B cell (primary cell): ENCODE measurements at regions of chr10 and their contacts with region 1.

Region 1: DNA sequence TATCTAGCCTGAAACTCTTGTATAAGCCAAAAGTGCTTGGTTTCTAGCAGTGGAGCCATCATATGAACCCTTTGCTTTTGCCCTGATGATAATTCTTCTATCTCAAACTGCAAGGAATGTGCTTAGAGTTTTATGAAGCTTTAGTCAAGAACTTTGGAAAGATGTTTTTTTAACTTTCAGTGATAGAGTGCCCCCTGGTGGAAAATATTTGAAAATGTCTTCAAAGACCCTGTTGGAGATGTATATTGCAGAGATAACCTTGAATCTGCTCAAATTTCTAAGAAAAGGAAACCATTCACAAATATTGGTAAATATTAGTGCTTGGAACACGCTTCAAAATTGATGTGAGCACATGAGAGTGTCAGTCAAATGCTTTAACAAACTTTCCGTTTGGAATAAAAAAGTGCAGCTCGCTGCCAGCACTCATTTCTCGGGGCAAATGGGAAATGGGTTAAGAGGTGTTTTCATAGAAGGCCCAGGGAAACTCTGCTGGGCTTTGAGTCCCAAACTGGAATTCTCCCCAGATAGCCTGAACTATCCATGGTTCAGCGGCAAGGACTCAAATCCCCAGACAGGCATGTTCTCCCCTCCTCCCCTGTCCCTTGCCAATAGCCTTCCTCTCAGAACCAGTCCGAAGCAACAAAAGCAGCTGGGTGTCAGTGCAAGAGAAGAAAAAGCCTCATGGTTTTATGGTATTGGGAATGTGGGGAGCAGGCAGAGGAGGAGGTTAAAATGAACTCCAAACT is 129.3 kb downstream of the MYOF start:
- DNase-seq: peak; percentile 57
- ATAC-seq: no peak
- H3K4me3 ChIP-seq: no peak overlapping the region
- H3K4me3 Mint-ChIP-seq: no peak overlapping the region
- H3K27ac ChIP-seq: no peak overlapping the region
- H3K27ac Mint-ChIP-seq: no peak overlapping the region
- H3K4me1 ChIP-seq: no peaks in the 10 kb centered on the region
- H3K4me1 Mint-ChIP-seq: no peaks in the 10 kb centered on the region
- H3K27me3 ChIP-seq: peaks cover 0 to 4% (median 0%) of the 10 kb centered on the region in 4 experiments
- H3K27me3 Mint-ChIP-seq: peaks cover 17% of the 10 kb centered on the region
- CTCF ChIP-seq: peak; percentile 84

Region 2: DNA sequence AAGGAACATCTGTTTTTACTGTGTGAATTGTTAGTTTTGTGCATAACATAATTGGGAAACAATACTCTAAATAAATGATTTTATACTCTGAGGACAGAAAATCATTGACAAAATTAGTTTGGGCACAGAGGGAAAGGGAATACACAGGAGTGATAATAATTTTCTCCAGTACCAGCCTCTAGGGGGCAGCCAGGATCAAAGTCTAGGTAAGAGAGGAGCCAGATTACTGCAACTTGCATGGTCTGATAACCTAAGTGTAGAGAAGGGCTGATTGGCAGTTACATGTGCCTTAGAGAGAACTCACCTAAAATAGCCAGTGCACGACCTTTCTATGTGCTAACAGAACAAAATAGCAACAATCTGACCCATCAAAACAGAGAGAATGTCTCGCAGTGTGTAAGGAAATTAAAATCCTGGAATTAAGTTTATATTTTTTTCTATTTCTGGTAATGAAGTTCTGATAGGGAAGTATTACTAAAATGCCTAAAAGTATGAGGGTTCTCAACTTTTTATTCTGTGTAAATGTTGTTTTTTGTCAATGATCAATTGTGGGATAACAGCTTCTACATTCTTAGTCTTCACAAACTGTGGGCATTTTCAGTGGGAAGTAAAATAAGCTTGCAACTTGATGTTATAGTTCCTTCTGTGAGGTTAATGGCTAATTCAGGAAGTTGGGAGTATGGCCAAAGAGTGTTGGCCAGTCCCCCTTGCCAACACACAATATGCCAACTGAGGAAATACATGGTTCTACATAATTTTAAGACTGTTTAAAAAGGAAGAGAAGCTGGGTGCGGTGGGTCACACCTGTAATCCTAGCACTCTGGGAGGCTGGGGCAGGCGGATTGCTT is 438.1 kb before region 1 on chr10:
- CTCF ChIA-PET with region 1: interaction called, 4 read pairs
- POLR2A ChIA-PET with region 1: no interaction called
- intact Hi-C with region 1: loop called (anchors 10 kb)
- DNase-seq: peak; percentile 49
- ATAC-seq: peak; percentile 67
- H3K4me3 ChIP-seq: no peak overlapping the region
- H3K4me3 Mint-ChIP-seq: no peak overlapping the region
- H3K27ac ChIP-seq: no peak overlapping the region
- H3K27ac Mint-ChIP-seq: no peak overlapping the region
- H3K4me1 ChIP-seq: no peaks in the 10 kb centered on the region
- H3K4me1 Mint-ChIP-seq: no peaks in the 10 kb centered on the region
- H3K27me3 ChIP-seq: no peaks in the 10 kb centered on the region
- H3K27me3 Mint-ChIP-seq: no peaks in the 10 kb centered on the region
- CTCF ChIP-seq: peak; percentile 85

Region 3: GRCh38 chr10:92965314-92965713 is 387.5 kb before region 1 on chr10:
- CTCF ChIA-PET with region 1: interaction called, 8 read pairs
- POLR2A ChIA-PET with region 1: no interaction called
- intact Hi-C with region 1: loop called (anchors 2 kb)
- DNase-seq: peak; percentile 48
- ATAC-seq: no peak
- H3K4me3 ChIP-seq: no peak overlapping the region
- H3K4me3 Mint-ChIP-seq: no peak overlapping the region
- H3K27ac ChIP-seq: no peak overlapping the region
- H3K27ac Mint-ChIP-seq: no peak overlapping the region
- H3K4me1 ChIP-seq: no peaks in the 10 kb centered on the region
- H3K4me1 Mint-ChIP-seq: peaks cover 1% of the 10 kb centered on the region
- H3K27me3 ChIP-seq: no peaks in the 10 kb centered on the region
- H3K27me3 Mint-ChIP-seq: no peaks in the 10 kb centered on the region
- CTCF ChIP-seq: peak; percentile 80

Region 4: DNA sequence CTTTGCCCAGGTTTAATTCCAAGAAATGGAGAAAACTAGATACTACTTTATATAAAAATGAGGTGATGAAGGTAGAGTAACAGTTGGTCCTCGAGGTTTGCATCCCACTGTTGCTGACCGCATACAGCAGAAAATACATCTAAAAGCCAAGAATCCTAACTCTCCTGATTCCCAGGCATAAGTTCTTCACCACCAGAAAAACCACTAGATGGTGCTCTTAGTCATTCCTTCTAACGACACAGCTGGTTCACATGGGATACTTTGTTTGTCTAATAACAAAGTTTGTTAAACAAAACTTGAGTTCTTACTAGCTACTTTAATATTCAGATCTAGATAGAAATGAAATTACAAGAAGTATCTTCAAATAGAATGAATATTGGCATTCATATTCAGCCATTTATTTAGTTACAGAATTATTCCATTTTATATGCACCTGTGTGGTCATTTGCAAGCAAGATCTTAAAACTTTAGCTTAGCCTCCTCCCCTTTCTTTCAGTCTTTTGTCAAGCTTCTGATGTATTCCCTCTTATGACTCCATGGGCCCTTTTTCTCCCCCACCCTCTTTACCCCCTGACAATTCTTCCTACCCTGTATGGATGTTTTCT is 346.3 kb before region 1 on chr10:
- CTCF ChIA-PET with region 1: interaction called, 3 read pairs
- POLR2A ChIA-PET with region 1: no interaction called
- intact Hi-C with region 1: loop called (anchors 2 kb)
- DNase-seq: peak; percentile 7
- ATAC-seq: no peak
- H3K4me3 ChIP-seq: no peak overlapping the region
- H3K4me3 Mint-ChIP-seq: no peak overlapping the region
- H3K27ac ChIP-seq: no peak overlapping the region
- H3K27ac Mint-ChIP-seq: no peak overlapping the region
- H3K4me1 ChIP-seq: no peaks in the 10 kb centered on the region
- H3K4me1 Mint-ChIP-seq: no peaks in the 10 kb centered on the region
- H3K27me3 ChIP-seq: no peaks in the 10 kb centered on the region
- H3K27me3 Mint-ChIP-seq: no peaks in the 10 kb centered on the region
- CTCF ChIP-seq: no peak

Region 5: DNA sequence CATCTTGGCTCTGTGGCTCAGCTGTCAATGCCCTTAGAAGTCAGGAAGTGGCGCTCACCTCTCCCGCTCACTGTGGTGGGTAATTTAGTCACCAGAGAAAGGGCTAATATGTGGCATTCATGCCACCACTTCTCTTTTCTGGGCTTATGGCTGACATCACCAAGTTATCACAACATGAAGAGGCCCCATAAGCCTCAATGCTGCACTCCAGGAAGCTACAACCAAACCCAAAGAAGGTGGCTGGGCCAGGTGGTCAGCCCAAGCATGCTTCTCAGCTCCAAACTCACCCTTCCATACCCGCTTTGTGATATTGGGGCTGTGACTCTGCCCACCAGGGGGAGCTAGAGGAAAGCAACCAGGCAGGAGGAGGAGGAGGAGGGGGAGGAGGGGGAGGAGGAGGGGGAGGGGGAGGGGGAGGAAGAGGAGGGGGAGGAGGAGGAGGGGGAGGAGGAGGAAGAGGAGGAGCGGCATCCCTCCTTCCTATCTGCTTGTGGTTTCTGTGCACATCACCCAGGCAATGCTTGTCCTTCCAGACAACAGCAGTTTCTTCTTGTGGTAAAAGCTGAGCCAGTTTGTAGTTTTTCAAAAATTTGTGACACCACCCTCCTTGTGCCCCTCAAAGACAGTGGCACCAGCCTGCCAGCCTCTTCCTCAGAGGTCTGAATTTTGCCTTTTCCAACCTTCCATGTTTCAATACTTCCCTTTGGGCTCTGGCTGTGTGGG is 237.0 kb before region 1 on chr10:
- CTCF ChIA-PET with region 1: interaction called, 16 read pairs
- POLR2A ChIA-PET with region 1: no interaction called
- intact Hi-C with region 1: loop called (anchors 10 kb)
- DNase-seq: peak; percentile 77
- ATAC-seq: peak; percentile 83
- H3K4me3 ChIP-seq: no peak overlapping the region
- H3K4me3 Mint-ChIP-seq: no peak overlapping the region
- H3K27ac ChIP-seq: peak overlapping the region in 1 of 2 donors; percentile 10
- H3K27ac Mint-ChIP-seq: peak overlapping the region; percentile 20
- H3K4me1 ChIP-seq: peaks cover 6 to 12% of the 10 kb centered on the region in 2 donors
- H3K4me1 Mint-ChIP-seq: peaks cover 14% of the 10 kb centered on the region
- H3K27me3 ChIP-seq: peaks cover 0 to 11% (median 4%) of the 10 kb centered on the region in 4 experiments
- H3K27me3 Mint-ChIP-seq: peaks cover 14% of the 10 kb centered on the region
- CTCF ChIP-seq: peak; percentile 20